BJ (cell line): ENCODE measurements at regions of chr7 and their contacts with region 1.

Region 1: DNA sequence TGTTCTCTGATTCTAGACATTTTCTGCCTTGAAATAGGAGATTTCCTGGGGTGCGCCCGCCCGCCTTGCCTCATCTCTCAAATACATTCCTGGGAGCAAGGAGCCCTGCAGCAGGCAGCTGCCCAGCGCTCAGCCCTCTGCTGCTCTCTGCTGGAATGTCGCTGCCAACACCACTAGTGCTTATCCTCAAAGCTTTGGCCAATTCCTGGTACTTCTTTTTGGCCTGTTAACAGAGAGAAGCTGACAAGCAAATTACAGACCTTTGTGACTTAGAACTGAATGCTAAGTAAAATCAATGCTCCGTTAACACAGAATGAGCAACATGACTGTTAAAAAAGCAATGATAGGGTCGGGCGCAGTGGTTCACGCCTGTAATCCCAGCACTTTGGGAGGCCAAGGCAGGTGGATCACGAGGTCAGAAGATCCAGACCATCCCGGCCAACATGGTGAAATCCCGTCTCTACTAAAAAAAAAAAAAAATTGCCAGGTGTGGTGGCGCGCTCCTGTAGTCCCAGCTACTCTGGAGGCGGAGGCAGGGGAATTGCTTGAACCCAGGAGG is 41.9 kb upstream of the SYPL1 start:
- DNase-seq: peak; percentile 21
- H3K4me3 ChIP-seq: no peak overlapping the region
- H3K27me3 ChIP-seq: peaks cover 7% of the 10 kb centered on the region
- CTCF ChIP-seq: peak; percentile 98

Region 2: GRCh38 chr7:106050011-106050745 is 103.8 kb before region 1 on chr7:
- CTCF ChIA-PET with region 1: interaction called, 184 read pairs
- POLR2A ChIA-PET with region 1: no interaction called
- DNase-seq: no peak
- H3K4me3 ChIP-seq: no peak overlapping the region
- H3K27me3 ChIP-seq: peaks cover 9% of the 10 kb centered on the region
- CTCF ChIP-seq: peak; percentile 57

Region 3: DNA sequence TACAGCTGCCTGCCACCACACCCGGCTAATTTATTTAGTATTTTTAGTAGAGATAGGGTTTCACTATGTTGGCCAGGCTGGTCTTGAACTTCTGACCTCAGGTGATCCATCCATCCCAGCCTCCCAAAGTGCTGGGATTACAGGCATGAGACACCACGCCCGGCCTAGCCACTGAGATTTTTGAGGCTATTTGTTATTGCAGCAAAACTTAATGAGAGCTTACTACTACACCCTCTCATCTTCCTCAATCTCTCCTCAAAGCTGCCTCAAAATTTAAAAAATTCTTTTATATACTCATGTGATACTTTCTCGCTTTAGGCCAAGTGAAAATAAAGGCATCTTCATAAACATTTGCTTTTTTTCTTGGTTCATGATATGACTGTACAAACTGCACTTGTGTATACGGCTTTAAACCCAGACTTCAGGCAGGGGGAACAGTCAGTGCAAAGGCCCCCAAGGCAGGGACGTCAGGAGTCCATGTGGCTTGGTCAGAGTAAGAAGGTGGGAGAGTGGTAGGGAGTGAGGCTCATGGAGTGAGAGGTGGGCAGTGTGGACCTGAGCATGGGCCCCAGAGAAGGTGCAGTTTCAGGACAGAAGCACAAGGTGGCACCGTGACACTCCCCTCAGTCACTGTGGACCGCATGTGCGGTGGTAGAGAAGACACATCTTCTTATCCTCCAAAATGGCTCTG is 97.3 kb before region 1 on chr7:
- CTCF ChIA-PET with region 1: interaction called, 184 read pairs
- POLR2A ChIA-PET with region 1: no interaction called
- DNase-seq: no peak
- H3K4me3 ChIP-seq: no peak overlapping the region
- H3K27me3 ChIP-seq: peaks cover 5% of the 10 kb centered on the region
- CTCF ChIP-seq: peak; percentile 88

Region 4: DNA sequence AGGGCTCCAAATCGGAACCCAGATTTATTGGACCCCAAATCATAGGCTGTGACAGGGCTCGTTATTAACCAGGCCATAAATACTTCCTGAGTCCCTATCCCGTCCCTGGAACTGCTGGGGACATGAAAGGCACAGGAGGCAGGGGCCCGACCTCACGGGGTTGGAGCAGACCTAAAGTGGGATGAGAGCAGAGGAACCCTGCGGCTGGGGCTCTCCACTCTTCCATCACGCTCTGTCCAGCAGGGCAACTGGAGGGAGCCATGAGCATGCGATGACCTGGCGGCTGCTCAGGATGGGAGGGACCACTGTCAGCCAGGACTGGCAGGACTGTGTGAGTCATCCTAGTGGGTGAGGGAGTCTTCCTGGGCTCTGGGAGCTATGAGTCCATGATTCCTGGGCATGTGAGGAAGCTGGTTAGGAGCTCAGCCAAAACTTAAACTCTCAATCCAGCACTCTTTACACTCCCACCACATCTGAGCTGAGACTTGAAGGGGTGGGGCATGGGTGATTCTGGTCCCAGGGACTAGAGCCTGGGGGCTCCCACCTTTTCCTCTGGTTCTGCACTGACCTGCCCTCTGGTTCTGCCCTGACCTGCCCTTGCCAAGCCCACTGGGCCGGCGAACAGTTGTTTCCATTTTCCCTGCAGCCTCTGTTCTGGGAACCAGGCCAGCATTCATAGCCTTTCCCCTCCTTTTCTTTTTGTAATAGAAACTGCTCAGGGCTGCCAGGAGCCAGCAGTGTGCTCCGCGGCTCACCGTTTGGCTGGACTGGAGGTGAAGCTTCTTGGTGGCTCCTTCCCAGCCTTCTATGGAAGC is 89.0 kb before region 1 on chr7:
- CTCF ChIA-PET with region 1: interaction called, 184 read pairs
- POLR2A ChIA-PET with region 1: no interaction called
- DNase-seq: peak; percentile 70
- H3K4me3 ChIP-seq: no peak overlapping the region
- H3K27me3 ChIP-seq: no peaks in the 10 kb centered on the region
- CTCF ChIP-seq: no peak

Region 5: DNA sequence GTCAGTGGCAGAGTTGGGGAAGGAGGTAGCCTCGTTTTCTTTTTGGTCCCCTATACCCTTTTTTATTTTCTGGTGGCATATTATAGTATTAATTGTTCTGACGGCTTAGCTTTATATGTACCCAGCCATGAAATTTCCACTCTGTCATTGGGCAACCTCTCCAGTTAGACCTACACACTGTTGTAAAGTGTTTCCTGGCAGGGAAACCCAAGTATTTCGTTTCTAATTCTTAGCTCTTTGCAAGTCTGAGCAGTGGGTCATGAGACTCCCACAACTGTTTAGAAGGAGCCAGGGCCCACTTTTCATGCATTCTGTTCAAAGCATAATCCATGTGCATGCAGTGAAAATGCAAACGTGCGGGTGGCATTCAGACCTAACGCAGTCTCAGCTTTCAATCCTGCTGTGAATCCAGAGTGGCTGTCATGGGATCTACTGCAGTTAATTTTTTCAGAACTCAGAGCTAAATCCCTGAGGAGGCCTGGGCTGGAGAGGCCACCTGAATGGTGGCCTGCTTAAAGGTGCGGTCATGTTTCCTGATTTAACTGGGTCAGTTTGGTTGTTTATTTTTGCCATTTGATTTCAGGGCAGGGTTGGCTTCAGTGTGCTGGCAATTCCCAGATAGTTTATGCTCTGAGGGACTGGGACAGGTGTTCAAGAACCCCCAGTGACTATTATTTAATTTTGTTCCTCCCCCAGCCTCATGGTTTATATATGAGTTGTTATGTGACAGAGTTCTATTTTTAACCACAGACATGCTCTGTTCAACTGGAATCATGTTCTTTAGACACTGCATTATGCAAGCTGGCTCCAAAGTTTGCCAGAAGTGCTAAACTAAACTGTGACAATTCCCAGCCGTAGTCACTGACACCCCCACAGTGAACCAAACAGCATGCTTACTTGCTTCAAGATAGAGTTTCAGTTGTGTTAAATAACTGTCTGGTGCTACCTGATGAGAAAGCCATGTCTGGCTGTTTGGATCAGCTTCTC is 14.4 kb before region 1 on chr7:
- CTCF ChIA-PET with region 1: interaction called, 11 read pairs
- POLR2A ChIA-PET with region 1: no interaction called
- DNase-seq: no peak
- H3K4me3 ChIP-seq: no peak overlapping the region
- H3K27me3 ChIP-seq: peaks cover 7% of the 10 kb centered on the region
- CTCF ChIP-seq: no peak

Region 6: DNA sequence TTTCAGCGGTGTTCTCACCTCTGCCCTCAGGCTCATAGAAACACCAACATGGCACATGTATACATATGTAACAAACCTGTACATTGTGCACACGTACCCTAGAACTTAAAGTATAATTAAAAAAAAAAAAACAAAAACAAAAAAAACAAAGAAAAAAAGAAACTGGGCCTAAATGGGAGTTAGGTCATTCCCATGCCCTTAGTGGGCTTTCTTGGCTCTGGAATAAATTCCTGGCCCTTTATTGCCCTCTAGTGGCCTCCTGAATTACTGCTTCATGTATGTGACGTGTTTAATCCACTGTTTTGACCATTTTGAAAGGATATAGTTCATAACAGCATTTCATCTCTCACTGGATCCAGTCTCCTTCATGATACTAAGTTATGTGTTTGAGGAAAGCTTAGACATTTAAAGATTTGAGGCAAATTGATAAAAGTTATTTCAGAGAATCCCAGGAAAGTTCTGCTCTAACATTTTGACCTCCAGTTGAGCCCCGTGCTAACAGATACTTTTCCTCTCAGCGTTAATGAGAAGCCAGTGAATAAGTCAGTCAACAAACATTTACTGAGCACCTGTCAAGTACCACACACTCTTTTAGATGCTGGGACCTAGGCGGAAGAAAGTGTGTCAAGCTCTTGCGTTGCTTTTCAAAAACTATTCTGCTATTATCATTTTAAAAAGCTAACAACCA is 12.8 kb after region 1 on chr7:
- CTCF ChIA-PET with region 1: interaction called, 65 read pairs
- POLR2A ChIA-PET with region 1: no interaction called
- DNase-seq: no peak
- H3K4me3 ChIP-seq: no peak overlapping the region
- H3K27me3 ChIP-seq: no peaks in the 10 kb centered on the region; the same call in none of the 2 replicates
- CTCF ChIP-seq: peak; percentile 73

Region 7: GRCh38 chr7:106177300-106177690 is 23.3 kb after region 1 on chr7:
- CTCF ChIA-PET with region 1: no interaction called
- POLR2A ChIA-PET with region 1: no interaction called
- DNase-seq: no peak
- H3K4me3 ChIP-seq: no peak overlapping the region
- H3K27me3 ChIP-seq: no peaks in the 10 kb centered on the region
- CTCF ChIP-seq: no peak

Region 8: DNA sequence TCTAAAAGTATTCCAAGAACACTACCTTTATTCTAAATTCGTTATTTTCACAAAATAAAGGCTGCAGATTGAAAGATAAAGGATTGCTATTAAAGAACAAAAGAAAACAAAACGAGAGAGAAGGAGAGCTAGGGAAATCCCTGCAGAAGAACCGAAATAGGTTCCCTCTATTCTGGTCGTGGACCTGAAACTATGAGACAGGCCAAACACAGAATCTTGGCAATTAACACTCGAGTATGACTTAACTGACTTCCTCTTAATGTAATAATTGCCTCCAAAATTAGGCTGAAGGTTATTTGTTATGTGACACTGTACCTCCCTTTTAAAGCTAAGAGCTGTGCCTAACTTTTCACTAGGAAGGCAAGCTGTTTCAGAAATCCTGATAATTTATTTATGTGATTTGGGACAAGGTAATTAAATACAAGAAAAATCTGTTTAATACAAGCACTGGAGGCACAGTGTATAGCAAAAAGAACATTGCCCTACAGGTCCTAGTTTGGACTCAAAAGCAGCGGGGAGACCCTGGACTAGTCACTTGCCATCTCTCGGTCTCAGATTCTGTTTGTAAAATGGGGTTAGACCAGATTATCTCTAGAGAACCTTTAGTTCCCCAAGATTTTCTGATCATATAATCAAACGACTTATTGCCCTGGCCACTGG is 119.2 kb after region 1 on chr7:
- CTCF ChIA-PET with region 1: no interaction called
- POLR2A ChIA-PET with region 1: no interaction called
- DNase-seq: no peak
- H3K4me3 ChIP-seq: no peak overlapping the region
- H3K27me3 ChIP-seq: no peaks in the 10 kb centered on the region
- CTCF ChIP-seq: no peak